ENCODE measurements at regions of chr5 and their contacts with region 1.

Region 1: DNA sequence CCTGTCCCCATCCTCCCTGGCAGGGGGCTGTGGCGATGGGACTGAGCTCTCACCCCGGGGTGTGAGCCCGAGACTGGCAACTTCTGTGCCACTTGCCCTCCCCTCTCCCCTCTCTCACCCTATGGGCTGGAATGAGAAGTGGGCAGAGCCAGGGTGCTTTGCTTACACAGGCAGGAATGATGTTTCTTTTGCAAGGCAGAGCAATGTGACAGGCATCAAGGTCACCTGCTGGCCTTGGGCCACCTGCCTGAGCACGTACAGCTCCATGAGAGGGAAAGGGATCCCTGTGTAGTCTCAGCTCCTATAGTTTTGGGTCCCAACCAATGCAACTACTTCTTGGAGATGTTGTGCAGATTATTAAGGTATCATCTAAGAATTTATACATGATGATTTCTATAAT is 252.8 kb upstream of the DAP start:
- DNase-seq: no peak
- H3K4me3 ChIP-seq: no peak overlapping the region
- CTCF ChIP-seq: no peak

Region 2: DNA sequence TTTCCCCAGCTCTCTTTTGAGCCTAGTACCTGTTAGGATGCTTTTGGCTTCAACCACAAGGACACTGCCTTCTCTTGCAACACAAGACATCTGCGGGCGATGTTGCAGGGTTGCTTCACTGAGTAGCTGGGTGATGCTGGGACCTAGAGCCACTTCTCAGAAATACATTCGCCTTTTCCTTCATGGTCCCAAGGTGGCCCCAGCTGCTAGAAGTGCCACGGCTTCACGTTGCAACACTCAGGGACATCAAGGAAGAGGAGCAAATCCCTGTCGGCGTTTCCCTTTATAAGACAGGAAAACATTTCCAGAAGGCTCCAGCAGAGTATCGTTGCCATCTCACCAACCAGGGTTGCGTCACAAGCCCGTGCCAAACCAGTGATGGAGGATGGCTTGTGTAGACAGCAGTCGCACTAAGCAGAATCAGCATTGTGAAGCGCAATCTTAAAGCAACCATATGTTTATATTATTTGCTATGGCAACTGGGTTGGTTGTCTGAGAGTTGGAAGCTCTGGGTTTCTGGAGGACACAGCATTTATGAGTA is 387.2 kb before region 1 on chr5:
- in situ Hi-C with region 1: no loop called
- DNase-seq: no peak
- H3K4me3 ChIP-seq: no peak overlapping the region
- CTCF ChIP-seq: no peak

Region 3: GRCh38 chr5:10934783-10935355 is 78.9 kb before region 1 on chr5:
- in situ Hi-C with region 1: loop called (anchors 5 kb)
- DNase-seq: no peak
- H3K4me3 ChIP-seq: no peak overlapping the region
- CTCF ChIP-seq: no peak

Region 4: GRCh38 chr5:11076945-11077613 is 63.3 kb after region 1 on chr5:
- in situ Hi-C with region 1: no loop called
- DNase-seq: no peak
- H3K4me3 ChIP-seq: no peak overlapping the region
- CTCF ChIP-seq: no peak

Region 5: GRCh38 chr5:11104651-11105112 is 90.9 kb after region 1 on chr5:
- in situ Hi-C with region 1: loop called (anchors 5 kb)
- DNase-seq: no peak
- H3K4me3 ChIP-seq: no peak overlapping the region
- CTCF ChIP-seq: no peak

Region 6: GRCh38 chr5:11384441-11385250 is 370.9 kb after region 1 on chr5:
- in situ Hi-C with region 1: no loop called
- DNase-seq: no peak
- H3K4me3 ChIP-seq: peak overlapping the region; percentile 42
- CTCF ChIP-seq: peak; percentile 8